HepG2 (cell line): ENCODE measurements at regions of chr14 and their contacts with region 1.

Region 1: GRCh38 chr14:24241829-24242443 is 487 bp downstream of the TINF2 start:
- DNase-seq: peak; percentile 97
- ATAC-seq: peak; percentile 91
- H3K4me3 ChIP-seq: peak overlapping the region; percentile 64 to 81 (median 71)
- H3K27ac ChIP-seq: peak overlapping the region; percentile 91
- H3K4me1 ChIP-seq: peaks cover 47% of the 10 kb centered on the region
- H3K27me3 ChIP-seq: no peaks in the 10 kb centered on the region; a peak in 1 of 5 replicates
- CTCF ChIP-seq: peak; percentile 62
- EP300 ChIP-seq: peak in 1 of 2 experiments; percentile 86; a peak in 2 of 4 replicates
- POLR2A ChIP-seq: no peak
- RAD21 ChIP-seq: 0 out of 2 replicates have a peak, but pooled peaks have one; percentile 30

Region 2: GRCh38 chr14:24013654-24014514 is 228.1 kb before region 1 on chr14:
- CTCF ChIA-PET with region 1: no interaction called
- POLR2A ChIA-PET with region 1: interaction called, 3 read pairs
- in situ Hi-C with region 1: no loop called
- intact Hi-C with region 1: loop called (anchors 1 kb)
- DNase-seq: peak; percentile 92
- ATAC-seq: peak; percentile 98
- H3K4me3 ChIP-seq: no peak overlapping the region
- H3K27ac ChIP-seq: no peak overlapping the region
- H3K4me1 ChIP-seq: peaks cover 53% of the 10 kb centered on the region
- H3K27me3 ChIP-seq: no peaks in the 10 kb centered on the region
- CTCF ChIP-seq: peak; percentile 100
- EP300 ChIP-seq: peak in 1 of 2 experiments; percentile 11; a peak in 1 of 4 replicates
- POLR2A ChIP-seq: no peak
- RAD21 ChIP-seq: peak; percentile 100

Region 3: GRCh38 chr14:24160850-24161804 is 80.8 kb before region 1 on chr14 and contains the start of gene IRF9:
- CTCF ChIA-PET with region 1: no interaction called
- POLR2A ChIA-PET with region 1: interaction called, 22 read pairs
- in situ Hi-C with region 1: no loop called
- intact Hi-C with region 1: no loop called
- DNase-seq: peak; percentile 99
- ATAC-seq: peak; percentile 92
- H3K4me3 ChIP-seq: peak within 1 kb of the TSS; percentile 50 to 78 (median 64)
- H3K27ac ChIP-seq: peak within 1 kb of the TSS; percentile 62
- H3K4me1 ChIP-seq: peaks cover 28% of the 10 kb centered on the region
- H3K27me3 ChIP-seq: no peaks in the 10 kb centered on the region; a peak in 1 of 5 replicates
- CTCF ChIP-seq: peak; percentile 100
- EP300 ChIP-seq: peak; percentile 55 to 85; a peak in 3 of 4 replicates
- POLR2A ChIP-seq: peak in 1 of 2 experiments; percentile 66; a peak in 2 of 4 replicates
- RAD21 ChIP-seq: peak; percentile 99
- total RNA-seq, gene IRF9: 13.8 and 14.9 TPM in 2 replicates

Region 4: DNA sequence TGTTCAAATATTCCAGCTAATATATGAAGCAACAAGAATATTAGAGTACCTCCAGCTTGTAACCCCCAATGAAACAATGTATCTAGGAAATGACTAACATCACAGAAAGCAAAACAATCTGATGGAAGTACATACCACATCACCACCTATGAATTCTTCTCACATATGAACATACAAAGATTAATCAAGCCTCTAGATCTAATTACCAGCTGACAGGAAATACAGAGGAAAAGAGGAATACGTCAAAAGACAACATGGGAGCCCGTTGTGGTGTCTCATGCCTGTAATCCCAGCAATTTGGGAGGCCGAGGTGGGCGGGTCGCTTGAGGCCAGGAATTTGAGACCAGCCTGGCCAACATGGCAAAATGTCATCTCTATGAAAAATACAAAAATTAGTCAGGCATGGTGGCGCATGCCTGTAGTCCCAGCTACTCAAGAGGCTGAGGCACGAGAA is 17.3 kb before region 1 on chr14:
- CTCF ChIA-PET with region 1: no interaction called
- POLR2A ChIA-PET with region 1: interaction called, 26 read pairs
- in situ Hi-C with region 1: no loop called
- intact Hi-C with region 1: no loop called
- DNase-seq: no peak
- ATAC-seq: no peak
- H3K4me3 ChIP-seq: no peak overlapping the region
- H3K27ac ChIP-seq: no peak overlapping the region
- H3K4me1 ChIP-seq: peaks cover 18% of the 10 kb centered on the region
- H3K27me3 ChIP-seq: no peaks in the 10 kb centered on the region
- CTCF ChIP-seq: no peak
- EP300 ChIP-seq: no peak
- POLR2A ChIP-seq: no peak
- RAD21 ChIP-seq: no peak

Region 5: DNA sequence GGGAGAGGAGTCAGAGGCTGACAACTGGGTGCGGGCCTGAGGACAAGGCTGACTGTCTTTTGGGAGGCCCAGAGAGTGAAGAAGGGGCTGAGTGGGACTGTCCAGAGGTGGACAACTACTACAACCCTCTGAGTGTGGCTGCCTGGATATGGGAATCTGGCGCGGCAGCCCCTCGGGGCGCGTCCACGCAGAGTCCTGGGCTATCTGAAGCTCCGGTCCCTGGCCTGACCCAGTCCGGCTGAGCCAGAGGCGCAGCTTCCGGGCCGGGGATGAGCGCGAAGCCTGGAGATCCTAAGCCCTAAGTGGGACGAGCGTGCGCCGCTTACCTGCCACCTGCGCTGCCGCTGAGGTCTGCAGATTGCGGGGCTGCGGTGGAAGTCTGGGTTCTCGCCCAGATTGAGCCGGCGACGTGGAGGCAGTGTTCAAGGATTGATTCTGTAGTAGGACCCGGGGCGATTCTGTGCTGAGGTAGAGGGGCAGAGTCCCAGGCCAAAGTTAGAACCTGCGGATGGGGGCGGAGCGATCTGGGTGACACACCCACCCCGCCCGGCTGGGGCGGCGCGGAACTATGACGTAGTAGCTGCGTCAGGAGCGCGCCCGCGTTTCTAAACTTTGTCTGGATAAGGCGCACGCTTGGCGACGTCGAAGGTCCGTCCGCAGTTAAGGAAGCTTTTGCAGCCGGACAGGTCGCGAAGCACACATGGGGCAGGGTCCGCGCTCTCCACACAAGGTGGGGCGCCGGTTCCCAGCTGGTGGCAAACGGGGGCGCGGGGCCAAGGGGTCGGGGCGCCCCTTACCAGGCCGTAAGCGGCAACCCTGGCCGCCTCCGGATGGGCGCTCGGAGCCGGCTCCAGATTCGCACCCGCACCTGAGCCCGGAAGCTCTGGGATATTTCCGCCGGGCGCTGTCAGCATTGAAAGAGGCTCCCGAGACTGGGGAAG is 57.6 kb after region 1 on chr14 and contains the starts of genes DHRS1 and NOP9:
- CTCF ChIA-PET with region 1: interaction called, 217 read pairs
- POLR2A ChIA-PET with region 1: interaction called, 850 read pairs
- in situ Hi-C with region 1: loop called (anchors 5 kb)
- intact Hi-C with region 1: loop called (anchors 1 kb)
- DNase-seq: peak; percentile 93
- ATAC-seq: peak; percentile 80
- H3K4me3 ChIP-seq: peak within 1 kb of the TSS; percentile 79 to 98 (median 89)
- H3K27ac ChIP-seq: peak within 1 kb of the TSS; percentile 83
- H3K4me1 ChIP-seq: peaks cover 45% of the 10 kb centered on the region
- H3K27me3 ChIP-seq: no peaks in the 10 kb centered on the region; a peak in 1 of 5 replicates
- CTCF ChIP-seq: peak; percentile 53
- EP300 ChIP-seq: peak; percentile 63 to 81; a peak in 3 of 4 replicates
- POLR2A ChIP-seq: peak in 1 of 2 experiments; percentile 88; a peak in 2 of 4 replicates
- RAD21 ChIP-seq: peak; percentile 54; the same call in 1 of the 2 replicates
- total RNA-seq, gene DHRS1: 46.3 and 60.8 TPM in 2 replicates
- total RNA-seq, gene NOP9: 61.6 and 64.5 TPM in 2 replicates

Region 6: GRCh38 chr14:24425704-24426103 is 183.8 kb after region 1 on chr14:
- CTCF ChIA-PET with region 1: no interaction called
- POLR2A ChIA-PET with region 1: interaction called, 33 read pairs
- in situ Hi-C with region 1: loop called (anchors 10 kb)
- intact Hi-C with region 1: loop called (anchors 2 kb)
- DNase-seq: peak; percentile 63
- ATAC-seq: no peak
- H3K4me3 ChIP-seq: no peak overlapping the region
- H3K27ac ChIP-seq: no peak overlapping the region
- H3K4me1 ChIP-seq: peaks cover 74% of the 10 kb centered on the region
- H3K27me3 ChIP-seq: no peaks in the 10 kb centered on the region; a peak in 2 of 5 replicates
- CTCF ChIP-seq: no peak
- EP300 ChIP-seq: no peak
- POLR2A ChIP-seq: no peak
- RAD21 ChIP-seq: no peak